Panc1 (cell line): ENCODE measurements at regions of chr14 and their contacts with region 1.

Region 1: GRCh38 chr14:68248481-68249255 is 429.1 kb downstream of the RAD51B start:
- DNase-seq: no peak
- ATAC-seq: peak; percentile 74
- H3K4me3 ChIP-seq: no peak overlapping the region
- H3K27ac ChIP-seq: peak overlapping the region; percentile 88
- H3K4me1 ChIP-seq: peaks cover 62% of the 10 kb centered on the region
- H3K27me3 ChIP-seq: no peaks in the 10 kb centered on the region
- CTCF ChIP-seq: peak; percentile 58

Region 2: DNA sequence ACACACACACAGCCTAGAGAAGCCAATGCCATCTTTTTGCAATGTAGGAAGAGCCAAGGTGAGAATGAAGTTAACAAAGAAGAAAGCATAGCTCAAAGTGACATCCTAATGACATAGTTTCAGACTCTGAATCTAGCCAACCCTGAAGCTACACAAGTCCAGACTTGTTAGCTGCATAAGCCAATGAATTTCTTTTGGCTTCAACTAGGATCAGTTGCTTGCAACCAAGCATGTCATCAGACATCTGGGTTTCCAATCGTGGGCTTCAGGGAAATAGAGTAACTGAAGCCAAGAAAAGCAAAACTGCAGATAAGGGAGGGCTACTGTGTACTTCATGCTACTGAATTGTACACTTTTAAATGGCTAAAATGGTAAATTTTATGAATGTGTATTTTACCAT is 1745.1 kb before region 1 on chr14:
- CTCF ChIA-PET with region 1: no interaction called
- POLR2A ChIA-PET with region 1: no interaction called
- in situ Hi-C with region 1: no loop called
- intact Hi-C with region 1: no loop called
- DNase-seq: no peak
- ATAC-seq: no peak
- H3K4me3 ChIP-seq: no peak overlapping the region
- H3K27ac ChIP-seq: no peak overlapping the region
- H3K4me1 ChIP-seq: no peaks in the 10 kb centered on the region
- H3K27me3 ChIP-seq: no peaks in the 10 kb centered on the region
- CTCF ChIP-seq: no peak

Region 3: GRCh38 chr14:67926821-67927220 is 321.8 kb before region 1 on chr14:
- CTCF ChIA-PET with region 1: interaction called, 16 read pairs
- POLR2A ChIA-PET with region 1: no interaction called
- in situ Hi-C with region 1: no loop called
- intact Hi-C with region 1: no loop called
- DNase-seq: no peak
- ATAC-seq: no peak
- H3K4me3 ChIP-seq: no peak overlapping the region
- H3K27ac ChIP-seq: no peak overlapping the region
- H3K4me1 ChIP-seq: no peaks in the 10 kb centered on the region
- H3K27me3 ChIP-seq: no peaks in the 10 kb centered on the region
- CTCF ChIP-seq: no peak

Region 4: GRCh38 chr14:67943947-67944346 is 304.7 kb before region 1 on chr14:
- CTCF ChIA-PET with region 1: interaction called, 7 read pairs
- POLR2A ChIA-PET with region 1: no interaction called
- in situ Hi-C with region 1: no loop called
- intact Hi-C with region 1: loop called (anchors 5 kb)
- DNase-seq: peak; percentile 57
- ATAC-seq: peak; percentile 86
- H3K4me3 ChIP-seq: no peak overlapping the region
- H3K27ac ChIP-seq: peak overlapping the region; percentile 87; the same call in 1 of the 2 replicates
- H3K4me1 ChIP-seq: peaks cover 36% of the 10 kb centered on the region
- H3K27me3 ChIP-seq: no peaks in the 10 kb centered on the region
- CTCF ChIP-seq: peak; percentile 58; the same call in 1 of the 2 replicates

Region 5: GRCh38 chr14:68084256-68084655 is 164.4 kb before region 1 on chr14:
- CTCF ChIA-PET with region 1: interaction called, 3 read pairs
- POLR2A ChIA-PET with region 1: no interaction called
- in situ Hi-C with region 1: no loop called
- intact Hi-C with region 1: loop called (anchors 10 kb)
- DNase-seq: no peak
- ATAC-seq: no peak
- H3K4me3 ChIP-seq: no peak overlapping the region
- H3K27ac ChIP-seq: peak overlapping the region; percentile 74; the same call in 1 of the 2 replicates
- H3K4me1 ChIP-seq: peaks cover 7% of the 10 kb centered on the region
- H3K27me3 ChIP-seq: no peaks in the 10 kb centered on the region
- CTCF ChIP-seq: peak; percentile 48

Region 6: GRCh38 chr14:68458840-68459469 is 210.3 kb after region 1 on chr14:
- CTCF ChIA-PET with region 1: no interaction called
- POLR2A ChIA-PET with region 1: no interaction called
- in situ Hi-C with region 1: no loop called
- intact Hi-C with region 1: loop called (anchors 10 kb)
- DNase-seq: no peak
- ATAC-seq: peak; percentile 89
- H3K4me3 ChIP-seq: no peak overlapping the region
- H3K27ac ChIP-seq: peak overlapping the region; percentile 89
- H3K4me1 ChIP-seq: peaks cover 19% of the 10 kb centered on the region
- H3K27me3 ChIP-seq: no peaks in the 10 kb centered on the region
- CTCF ChIP-seq: no peak

Region 7: GRCh38 chr14:68792976-68793733 is 544.5 kb after region 1 on chr14 and contains the start of gene ZFP36L1:
- CTCF ChIA-PET with region 1: no interaction called
- POLR2A ChIA-PET with region 1: interaction called, 10 read pairs
- in situ Hi-C with region 1: no loop called
- intact Hi-C with region 1: loop called (anchors 2 kb)
- DNase-seq: no peak
- ATAC-seq: peak; percentile 58
- H3K4me3 ChIP-seq: peak within 1 kb of the TSS; percentile 84 to 95
- H3K27ac ChIP-seq: peak within 1 kb of the TSS; percentile 98
- H3K4me1 ChIP-seq: peaks cover 21% of the 10 kb centered on the region
- H3K27me3 ChIP-seq: no peaks in the 10 kb centered on the region
- CTCF ChIP-seq: no peak
- total RNA-seq, gene ZFP36L1: 84.9 TPM

Region 8: DNA sequence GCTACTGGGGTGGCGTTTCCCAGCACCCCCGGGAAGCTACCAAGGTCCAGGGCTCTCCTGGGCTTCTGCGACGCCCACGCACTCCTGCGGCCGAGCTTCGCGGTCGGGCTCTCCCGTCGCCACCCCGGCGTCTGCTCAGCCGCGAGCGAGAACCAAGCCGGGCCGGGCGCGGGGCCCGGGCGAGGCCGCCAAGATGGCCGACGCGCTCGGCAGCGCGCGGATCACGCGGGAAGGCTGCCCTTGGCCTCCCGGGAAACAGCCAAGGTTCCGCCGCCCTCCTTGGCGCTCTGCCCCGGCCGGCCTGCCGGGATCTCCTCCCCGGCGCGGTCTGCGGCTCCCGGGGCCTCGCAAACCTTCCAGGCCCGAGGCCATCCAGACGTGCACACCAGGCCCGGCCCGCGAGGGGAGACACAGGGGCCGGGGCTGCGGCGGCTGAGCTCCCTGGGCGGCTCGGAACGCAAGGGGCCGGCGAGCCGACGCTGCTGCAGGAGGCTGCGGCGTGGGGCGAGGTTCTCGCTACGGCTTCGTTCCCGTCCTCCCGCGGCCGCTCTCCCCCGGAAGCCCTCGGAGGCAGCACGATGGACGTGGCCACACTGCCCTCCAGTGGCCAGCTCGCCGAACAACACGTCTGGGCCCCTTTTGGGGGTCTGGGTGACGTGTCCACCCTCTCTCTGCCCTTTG is 567.7 kb after region 1 on chr14:
- CTCF ChIA-PET with region 1: no interaction called
- POLR2A ChIA-PET with region 1: no interaction called
- in situ Hi-C with region 1: no loop called
- intact Hi-C with region 1: loop called (anchors 2 kb)
- DNase-seq: no peak
- ATAC-seq: peak; percentile 89
- H3K4me3 ChIP-seq: peak overlapping the region; percentile 31 to 43
- H3K27ac ChIP-seq: peak overlapping the region; percentile 81
- H3K4me1 ChIP-seq: peaks cover 23% of the 10 kb centered on the region
- H3K27me3 ChIP-seq: no peaks in the 10 kb centered on the region
- CTCF ChIP-seq: peak; percentile 88